Mammary epithelial cell (primary cell): ENCODE measurements at regions of chr17 and their contacts with region 1.

Region 1: DNA sequence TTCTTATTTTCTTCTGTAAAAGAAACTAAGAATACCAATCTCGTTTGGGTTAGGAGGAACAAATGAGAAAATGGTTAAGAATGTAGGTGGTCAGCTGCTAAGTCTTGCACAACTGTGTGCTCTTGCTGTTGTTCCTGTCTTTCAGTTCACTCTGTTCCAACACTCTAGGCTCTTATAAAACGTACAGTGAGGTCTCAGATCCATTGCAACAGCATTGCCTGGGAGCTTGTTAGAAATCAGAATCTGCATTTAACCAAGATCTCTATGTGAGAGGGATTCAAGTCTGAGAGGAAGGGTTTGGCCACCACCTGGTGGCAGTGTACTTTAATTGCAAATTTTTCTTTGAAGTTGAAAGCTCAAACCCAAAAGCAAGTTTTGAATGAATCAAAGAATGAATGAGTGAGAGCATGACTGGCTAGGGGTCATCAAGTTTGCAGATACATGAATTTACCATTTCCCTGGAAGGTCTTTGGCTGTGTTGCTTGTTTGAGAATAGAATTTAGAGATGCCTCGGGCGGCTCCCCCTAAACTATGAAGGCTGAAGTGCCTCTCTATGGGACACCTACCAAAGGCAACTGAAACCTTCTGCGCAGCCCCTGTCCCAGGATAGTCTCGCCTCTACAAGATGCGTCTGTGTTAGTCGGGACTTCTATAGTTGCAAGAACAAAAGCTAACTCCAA is 2.5 kb downstream of the ALOX15B start:
- DNase-seq: peak; percentile 84
- H3K4me3 ChIP-seq: no peak overlapping the region
- H3K27ac ChIP-seq: peak overlapping the region; percentile 67
- H3K4me1 ChIP-seq: peaks cover 32% of the 10 kb centered on the region
- H3K27me3 ChIP-seq: no peaks in the 10 kb centered on the region
- CTCF ChIP-seq: peak; percentile 54 to 66

Region 2: DNA sequence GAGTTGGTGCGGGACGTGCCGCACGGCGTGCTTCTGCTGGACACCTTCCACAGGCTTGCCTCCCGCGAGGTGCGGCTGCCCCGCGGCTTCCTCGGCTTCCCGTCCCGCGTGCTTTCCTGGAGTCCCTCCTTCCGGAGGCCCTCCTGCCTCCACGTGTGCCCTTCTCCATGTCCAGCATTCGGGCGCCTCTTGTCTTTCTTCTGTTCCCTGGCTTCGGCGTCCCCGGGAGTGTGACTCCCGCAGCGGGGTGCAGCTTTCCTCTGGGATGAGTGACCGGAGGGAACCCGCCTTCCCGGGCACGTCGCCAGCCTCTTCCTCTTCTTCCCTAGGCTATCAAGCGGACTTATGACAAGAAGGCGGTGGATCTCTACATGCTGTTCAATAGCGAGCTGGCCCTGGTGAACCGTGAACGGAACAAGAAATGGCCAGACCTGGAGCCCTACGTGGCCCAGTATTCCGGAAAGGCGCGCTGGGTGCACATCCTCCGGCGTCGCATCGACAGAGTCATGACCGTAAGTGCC is 300.8 kb before region 1 on chr17:
- CTCF ChIA-PET with region 1: no interaction called
- dilution Hi-C with region 1: no loop called
- in situ Hi-C with region 1: no loop called
- intact Hi-C with region 1: loop called (anchors 2 kb)
- DNase-seq: no peak
- H3K4me3 ChIP-seq: no peak overlapping the region
- H3K27ac ChIP-seq: no peak overlapping the region
- H3K4me1 ChIP-seq: peaks cover under 1% of the 10 kb centered on the region
- H3K27me3 ChIP-seq: peaks cover 3% of the 10 kb centered on the region
- CTCF ChIP-seq: no peak

Region 3: DNA sequence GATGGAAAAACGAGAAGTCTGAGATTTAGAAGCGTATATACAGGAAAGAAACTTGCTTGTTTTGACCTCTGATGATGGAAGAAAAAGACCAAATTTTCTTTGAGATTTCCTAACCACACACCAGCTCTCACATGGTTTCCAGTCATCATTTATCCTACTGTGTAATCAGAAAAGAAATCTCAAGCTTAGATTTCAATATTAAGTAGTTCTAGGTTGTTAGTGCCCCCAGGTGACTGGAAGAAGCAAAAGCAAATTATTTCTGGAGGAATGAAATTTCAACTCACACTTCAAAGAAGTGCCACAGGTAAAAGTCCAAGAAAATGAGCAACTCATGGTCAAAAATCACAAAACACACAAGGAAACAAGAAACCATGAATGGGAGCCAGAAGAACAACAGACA is 259.2 kb before region 1 on chr17:
- CTCF ChIA-PET with region 1: no interaction called
- dilution Hi-C with region 1: no loop called
- in situ Hi-C with region 1: no loop called
- intact Hi-C with region 1: no loop called
- DNase-seq: peak; percentile 32
- H3K4me3 ChIP-seq: no peak overlapping the region
- H3K27ac ChIP-seq: no peak overlapping the region
- H3K4me1 ChIP-seq: peaks cover 3% of the 10 kb centered on the region
- H3K27me3 ChIP-seq: no peaks in the 10 kb centered on the region
- CTCF ChIP-seq: peak; percentile 13 to 35

Region 4: GRCh38 chr17:7862692-7863437 is 178.5 kb before region 1 on chr17:
- CTCF ChIA-PET with region 1: no interaction called
- dilution Hi-C with region 1: no loop called
- in situ Hi-C with region 1: no loop called
- intact Hi-C with region 1: loop called (anchors 1 kb)
- DNase-seq: no peak
- H3K4me3 ChIP-seq: no peak overlapping the region
- H3K27ac ChIP-seq: no peak overlapping the region
- H3K4me1 ChIP-seq: peaks cover 13% of the 10 kb centered on the region
- H3K27me3 ChIP-seq: no peaks in the 10 kb centered on the region
- CTCF ChIP-seq: peak; percentile 62 to 70

Region 5: GRCh38 chr17:7915611-7916382 is 125.6 kb before region 1 on chr17 and contains the start of gene RNF227:
- CTCF ChIA-PET with region 1: interaction called, 11 read pairs
- dilution Hi-C with region 1: no loop called
- in situ Hi-C with region 1: loop called (anchors 5 to 10 kb)
- intact Hi-C with region 1: loop called (anchors 1 kb)
- DNase-seq: peak; percentile 94
- H3K4me3 ChIP-seq: peak within 1 kb of the TSS; percentile 48 to 76 (median 57)
- H3K27ac ChIP-seq: peak within 1 kb of the TSS; percentile 72
- H3K4me1 ChIP-seq: peaks cover 28% of the 10 kb centered on the region
- H3K27me3 ChIP-seq: no peaks in the 10 kb centered on the region
- CTCF ChIP-seq: no peak
- total RNA-seq, gene RNF227: 5.2 to 6.4 TPM

Region 6: DNA sequence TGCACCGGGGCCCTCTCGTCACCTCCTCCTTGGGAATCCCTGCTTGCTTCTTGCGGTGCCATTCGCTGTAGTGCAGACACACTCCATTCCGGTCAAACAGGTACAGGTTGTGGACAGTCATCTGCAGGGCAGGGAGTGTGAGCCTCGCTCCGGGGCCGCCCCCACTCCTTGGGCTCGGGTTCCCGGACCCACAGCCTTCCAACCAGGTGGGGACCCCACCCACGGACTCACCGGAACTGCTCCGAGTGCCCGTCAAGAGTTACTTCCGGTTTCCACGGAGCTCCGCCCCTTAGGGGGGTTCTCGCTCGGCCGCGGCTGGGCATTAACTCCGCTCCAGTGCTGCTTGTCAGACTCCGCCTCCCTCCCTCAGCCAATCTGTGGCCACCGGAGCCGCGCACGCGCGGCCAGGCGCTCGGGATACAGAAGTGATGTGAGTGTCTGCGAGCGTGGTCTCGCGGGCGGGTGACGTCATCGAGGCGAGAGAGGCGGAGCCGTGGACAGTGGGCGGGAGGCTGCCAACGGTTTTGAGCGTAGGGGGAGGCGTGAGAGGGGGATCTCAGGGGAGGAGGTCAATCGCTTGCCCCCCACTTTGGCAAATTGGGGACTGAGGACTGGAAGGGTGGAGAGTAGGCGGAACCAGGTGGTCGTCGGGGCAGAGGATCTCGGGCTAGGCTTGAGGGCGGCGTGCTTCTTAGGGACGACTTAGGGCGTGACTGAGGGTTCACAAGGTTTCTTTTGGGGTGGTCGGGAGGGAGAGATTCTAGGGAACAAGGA is 109.5 kb before region 1 on chr17 and contains the starts of genes CNTROB and TRAPPC1:
- CTCF ChIA-PET with region 1: no interaction called
- dilution Hi-C with region 1: no loop called
- in situ Hi-C with region 1: loop called in 1 of 2 experiments (anchors 10 kb)
- intact Hi-C with region 1: loop called (anchors 1 kb)
- DNase-seq: peak; percentile 99
- H3K4me3 ChIP-seq: peak within 1 kb of the TSS; percentile 70 to 94 (median 87)
- H3K27ac ChIP-seq: peak within 1 kb of the TSS; percentile 85
- H3K4me1 ChIP-seq: peaks cover 16% of the 10 kb centered on the region
- H3K27me3 ChIP-seq: no peaks in the 10 kb centered on the region
- CTCF ChIP-seq: no peak
- total RNA-seq, gene CNTROB: 20.3 to 38.4 TPM
- total RNA-seq, gene TRAPPC1: 43.3 to 174 TPM

Region 7: DNA sequence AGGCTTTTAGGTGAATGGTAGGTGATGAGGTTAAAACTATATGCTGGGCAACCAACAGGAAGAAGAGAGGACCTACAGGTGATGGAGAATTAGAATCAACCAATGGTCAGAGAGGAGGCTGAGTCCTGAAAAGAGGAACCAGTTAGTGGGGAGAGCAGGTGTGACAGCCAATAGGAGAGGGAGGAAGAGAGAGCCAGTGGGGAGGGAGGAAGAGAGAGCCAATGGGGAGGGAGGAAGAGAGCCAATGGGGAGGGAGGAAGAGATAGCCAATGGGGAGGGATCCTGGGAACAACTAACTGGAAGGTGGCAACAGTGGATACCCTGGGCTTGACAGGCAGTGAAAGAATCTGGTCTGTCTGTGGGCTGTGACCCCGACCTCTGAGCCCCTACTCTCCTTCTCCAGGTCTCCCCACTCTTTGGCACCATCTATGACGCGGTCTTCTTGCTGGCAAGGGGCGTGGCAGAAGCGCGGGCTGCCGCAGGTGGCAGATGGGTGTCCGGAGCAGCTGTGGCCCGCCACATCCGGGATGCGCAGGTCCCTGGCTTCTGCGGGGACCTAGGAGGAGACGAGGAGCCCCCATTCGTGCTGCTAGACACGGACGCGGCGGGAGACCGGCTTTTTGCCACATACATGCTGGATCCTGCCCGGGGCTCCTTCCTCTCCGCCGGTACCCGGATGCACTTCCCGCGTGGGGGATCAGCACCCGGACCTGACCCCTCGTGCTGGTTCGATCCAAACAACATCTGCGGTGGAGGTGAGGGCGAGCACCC is 35.2 kb before region 1 on chr17:
- CTCF ChIA-PET with region 1: interaction called, 3 read pairs
- dilution Hi-C with region 1: loop called (anchors 5 kb)
- in situ Hi-C with region 1: no loop called
- intact Hi-C with region 1: loop called (anchors 5 kb)
- DNase-seq: no peak
- H3K4me3 ChIP-seq: no peak overlapping the region
- H3K27ac ChIP-seq: no peak overlapping the region
- H3K4me1 ChIP-seq: peaks cover 17% of the 10 kb centered on the region
- H3K27me3 ChIP-seq: no peaks in the 10 kb centered on the region
- CTCF ChIP-seq: no peak